Ascending aorta (tissue), 2 donors: ENCODE measurements at regions of chr5 and their contacts with region 1.

Region 1: GRCh38 chr5:54415896-54416601 is 39.5 kb upstream of the HSPB3 start:
- DNase-seq: no peak
- H3K4me3 ChIP-seq: no peak overlapping the region
- H3K27ac ChIP-seq: no peak overlapping the region
- H3K4me1 ChIP-seq: no peaks in the 10 kb centered on the region
- H3K27me3 ChIP-seq: no peaks in the 10 kb centered on the region
- CTCF ChIP-seq: no peak

Region 2: DNA sequence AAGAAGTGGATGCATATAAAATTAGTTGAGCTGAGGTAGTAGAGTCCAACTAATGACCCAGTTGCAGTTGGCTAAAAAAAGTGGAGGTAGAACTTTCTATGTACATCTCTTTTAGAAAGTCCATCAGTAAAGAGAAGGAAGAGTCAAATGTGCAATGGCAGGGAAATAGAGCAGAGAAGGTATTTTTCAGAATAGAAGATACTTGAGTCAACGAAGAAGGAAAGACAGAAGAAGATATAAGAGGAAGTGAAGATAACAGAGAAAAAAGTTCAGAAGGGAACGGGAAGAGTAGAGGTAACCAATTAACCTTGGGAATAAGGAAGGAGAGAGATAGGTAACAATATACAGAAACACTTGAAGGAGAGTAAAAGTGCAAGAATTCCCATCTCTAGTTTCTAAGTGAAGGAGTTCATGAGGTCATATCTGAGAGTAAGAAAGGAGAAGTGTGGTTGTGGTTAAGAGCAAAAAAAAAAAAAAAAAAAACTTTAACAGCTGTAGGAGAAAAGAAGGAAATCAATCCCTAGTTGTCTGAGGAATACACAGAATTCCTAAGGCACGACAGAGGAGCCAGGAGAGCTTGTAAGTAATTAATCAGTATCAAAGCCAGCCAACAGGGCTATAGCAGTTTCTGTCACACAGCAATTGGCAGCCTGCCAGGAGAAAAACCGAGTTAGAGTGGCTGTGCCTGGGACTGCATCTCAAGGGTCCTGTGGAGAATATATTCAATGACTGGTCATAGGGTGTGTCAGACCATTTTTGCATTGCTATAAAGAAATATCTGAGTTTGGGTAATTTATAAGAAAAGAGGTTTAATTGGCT is 166.6 kb before region 1 on chr5:
- intact Hi-C with region 1: loop called (anchors 5 kb)
- DNase-seq: no peak
- H3K4me3 ChIP-seq: no peak overlapping the region
- H3K27ac ChIP-seq: no peak overlapping the region
- H3K4me1 ChIP-seq: no peaks in the 10 kb centered on the region
- H3K27me3 ChIP-seq: no peaks in the 10 kb centered on the region
- CTCF ChIP-seq: no peak

Region 3: GRCh38 chr5:54320256-54320655 is 95.8 kb before region 1 on chr5:
- intact Hi-C with region 1: no loop called
- DNase-seq: no peak
- H3K4me3 ChIP-seq: no peak overlapping the region
- H3K27ac ChIP-seq: no peak overlapping the region
- H3K4me1 ChIP-seq: no peaks in the 10 kb centered on the region
- H3K27me3 ChIP-seq: no peaks in the 10 kb centered on the region
- CTCF ChIP-seq: no peak

Region 4: DNA sequence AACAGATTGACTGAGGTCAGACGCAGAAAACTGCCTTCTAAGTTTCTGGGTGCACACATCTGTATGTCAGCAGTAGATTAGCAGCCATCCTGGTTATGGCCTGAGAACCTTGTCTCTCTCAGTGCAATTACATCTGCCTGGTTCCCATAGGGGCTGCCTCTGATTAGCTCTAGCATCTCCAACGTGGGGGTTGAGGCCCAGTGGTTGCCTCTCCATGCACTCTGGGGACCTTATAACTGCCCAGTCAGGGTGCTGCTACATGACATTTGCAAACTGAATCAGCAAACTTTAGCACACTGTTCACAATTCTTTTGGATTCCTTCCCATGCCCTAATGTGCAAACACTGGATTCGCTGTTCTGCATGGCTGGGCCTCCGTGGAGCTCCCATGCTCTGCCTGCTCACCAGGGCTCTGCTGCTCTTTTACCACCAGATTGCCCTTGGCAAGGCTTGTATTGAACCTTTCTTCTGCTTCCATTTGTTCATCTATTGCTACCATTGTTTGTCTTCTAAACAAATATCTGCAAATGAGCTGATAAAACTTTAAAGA is 137.7 kb after region 1 on chr5:
- intact Hi-C with region 1: no loop called
- DNase-seq: no peak
- H3K4me3 ChIP-seq: no peak overlapping the region
- H3K27ac ChIP-seq: no peak overlapping the region
- H3K4me1 ChIP-seq: peaks cover 0 to 2% of the 10 kb centered on the region in 2 donors
- H3K27me3 ChIP-seq: no peaks in the 10 kb centered on the region
- CTCF ChIP-seq: no peak